ENCODE measurements at regions of chr1 and their contacts with region 1.

Region 1: GRCh38 chr1:89706700-89707012 is 73.7 kb downstream of the LRRC8C start:
- DNase-seq: no peak
- ATAC-seq: no peak
- H3K4me3 ChIP-seq: no peak overlapping the region
- H3K4me3 Mint-ChIP-seq: no peak overlapping the region
- H3K27ac ChIP-seq: no peak overlapping the region
- H3K27ac Mint-ChIP-seq: no peak overlapping the region
- H3K4me1 ChIP-seq: peaks cover 6% of the 10 kb centered on the region
- H3K4me1 Mint-ChIP-seq: peaks cover 59% of the 10 kb centered on the region
- H3K27me3 ChIP-seq: no peaks in the 10 kb centered on the region
- H3K27me3 Mint-ChIP-seq: no peaks in the 10 kb centered on the region
- CTCF ChIP-seq: no peak

Region 2: DNA sequence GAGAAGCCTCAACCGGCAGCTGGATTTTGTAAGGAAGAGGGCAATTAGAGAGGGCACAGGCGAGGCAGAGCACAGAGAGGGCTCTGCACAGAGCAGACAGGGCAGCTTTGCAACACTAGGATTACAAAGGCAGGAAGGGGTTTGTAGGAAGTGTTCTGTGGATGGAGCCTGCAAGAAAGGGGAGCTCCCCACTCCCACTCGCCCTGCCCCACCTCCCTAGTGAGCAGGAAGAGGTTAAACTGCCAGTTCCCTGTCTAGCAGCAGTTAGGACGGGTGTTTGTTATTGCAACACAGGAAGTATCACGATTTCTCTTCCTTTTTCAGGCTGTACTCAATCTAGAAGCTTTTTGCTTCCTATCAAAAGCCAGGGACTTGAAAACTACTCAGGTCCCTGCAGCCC is 50.9 kb after region 1 on chr1:
- CTCF ChIA-PET with region 1: interaction called, 9 read pairs
- POLR2A ChIA-PET with region 1: no interaction called
- intact Hi-C with region 1: loop called in 1 of 2 experiments (anchors 2 kb)
- DNase-seq: peak in 8 of 9 experiments; percentile 13 to 73 (median 38)
- ATAC-seq: peak; percentile 68
- H3K4me3 ChIP-seq: peak overlapping the region; percentile 2 to 32
- H3K4me3 Mint-ChIP-seq: peak overlapping the region; percentile 74
- H3K27ac ChIP-seq: peak overlapping the region; percentile 11 to 67
- H3K27ac Mint-ChIP-seq: peak overlapping the region; percentile 92
- H3K4me1 ChIP-seq: peaks cover 74% of the 10 kb centered on the region
- H3K4me1 Mint-ChIP-seq: peaks cover 88% of the 10 kb centered on the region
- H3K27me3 ChIP-seq: no peaks in the 10 kb centered on the region
- H3K27me3 Mint-ChIP-seq: no peaks in the 10 kb centered on the region
- CTCF ChIP-seq: no peak